Endothelial cell of umbilical vein (primary cell): ENCODE measurements at regions of chr4 and their contacts with region 1.

Region 1: DNA sequence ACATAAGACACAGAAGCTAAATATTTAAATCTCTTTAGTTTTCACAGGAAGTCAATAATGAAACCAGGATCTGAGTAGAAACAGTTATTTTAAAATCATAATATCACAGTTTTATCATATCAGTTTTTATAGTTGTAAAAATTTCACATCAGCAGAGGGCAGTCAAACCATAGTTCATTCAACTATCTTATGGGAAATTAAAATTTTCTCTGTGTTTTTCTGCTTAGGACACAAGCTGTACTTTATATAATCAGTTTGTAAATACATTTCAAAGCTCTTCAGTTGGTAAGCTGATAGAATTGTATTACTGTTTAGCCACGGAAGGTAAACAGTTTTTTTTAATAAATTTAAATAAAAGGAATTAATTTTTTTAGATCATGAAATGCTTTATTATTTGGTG is 204.8 kb upstream of the NUDT6 start:
- DNase-seq: peak; percentile 67
- H3K4me3 ChIP-seq: no peak overlapping the region
- H3K27ac ChIP-seq: peak overlapping the region; percentile 65
- H3K4me1 ChIP-seq: peaks cover 19% of the 10 kb centered on the region
- H3K27me3 ChIP-seq: no peaks in the 10 kb centered on the region
- CTCF ChIP-seq: no peak
- POLR2A ChIP-seq: no peak

Region 2: DNA sequence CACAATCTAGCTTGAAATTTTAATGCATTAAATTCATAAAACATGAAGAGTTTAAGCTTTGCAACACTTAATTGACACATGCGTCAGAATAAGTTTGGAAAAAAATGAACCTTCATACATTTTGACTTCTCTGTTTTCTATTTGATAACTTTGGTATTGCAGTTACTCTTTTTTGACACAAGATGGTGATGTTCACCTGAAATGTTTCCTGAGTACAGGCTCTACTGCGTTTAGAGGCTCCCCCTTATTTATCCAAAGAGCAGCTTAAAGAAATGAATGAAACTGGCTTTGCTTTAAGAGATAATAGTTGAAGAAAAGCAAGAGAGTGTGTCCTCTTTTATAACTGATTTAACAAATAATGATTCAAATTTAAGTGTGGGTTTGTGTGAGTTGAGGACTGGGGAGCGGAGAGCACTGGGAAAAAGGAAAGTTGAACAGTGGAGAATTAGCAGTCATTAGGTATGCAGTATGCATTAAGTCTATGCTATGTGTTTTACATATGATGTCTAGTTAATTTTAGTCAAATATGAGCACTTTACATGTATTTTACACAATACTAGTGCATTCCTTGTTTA is 24.2 kb before region 1 on chr4:
- CTCF ChIA-PET with region 1: interaction called, 11 read pairs
- POLR2A ChIA-PET with region 1: no interaction called
- dilution Hi-C with region 1: no loop called
- intact Hi-C with region 1: no loop called
- DNase-seq: peak; percentile 52
- H3K4me3 ChIP-seq: no peak overlapping the region
- H3K27ac ChIP-seq: no peak overlapping the region
- H3K4me1 ChIP-seq: no peaks in the 10 kb centered on the region
- H3K27me3 ChIP-seq: no peaks in the 10 kb centered on the region
- CTCF ChIP-seq: peak; percentile 37 to 44
- POLR2A ChIP-seq: no peak

Region 3: DNA sequence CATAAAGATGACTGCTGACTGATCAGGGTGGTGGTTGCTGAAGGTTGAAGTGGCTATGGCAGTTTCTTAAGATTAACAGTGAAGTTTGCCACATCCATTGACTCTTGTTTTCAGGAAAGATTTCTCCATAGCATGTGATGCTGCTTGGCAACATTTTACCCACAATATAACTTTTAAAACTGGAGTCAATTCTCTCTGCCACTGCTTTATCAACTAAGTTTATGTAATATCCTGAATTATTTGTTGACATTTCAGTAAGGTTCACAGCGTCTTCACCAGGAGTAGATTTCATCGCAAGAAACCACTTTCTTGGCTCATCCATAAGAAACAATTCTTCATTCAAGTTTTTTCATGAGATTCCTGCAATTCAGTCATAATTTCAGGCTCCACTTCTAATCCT is 102.8 kb after region 1 on chr4:
- CTCF ChIA-PET with region 1: no interaction called
- POLR2A ChIA-PET with region 1: no interaction called
- dilution Hi-C with region 1: no loop called
- intact Hi-C with region 1: no loop called
- DNase-seq: no peak
- H3K4me3 ChIP-seq: no peak overlapping the region
- H3K27ac ChIP-seq: no peak overlapping the region
- H3K4me1 ChIP-seq: peaks cover 6% of the 10 kb centered on the region
- H3K27me3 ChIP-seq: no peaks in the 10 kb centered on the region
- CTCF ChIP-seq: no peak
- POLR2A ChIP-seq: no peak

Region 4: DNA sequence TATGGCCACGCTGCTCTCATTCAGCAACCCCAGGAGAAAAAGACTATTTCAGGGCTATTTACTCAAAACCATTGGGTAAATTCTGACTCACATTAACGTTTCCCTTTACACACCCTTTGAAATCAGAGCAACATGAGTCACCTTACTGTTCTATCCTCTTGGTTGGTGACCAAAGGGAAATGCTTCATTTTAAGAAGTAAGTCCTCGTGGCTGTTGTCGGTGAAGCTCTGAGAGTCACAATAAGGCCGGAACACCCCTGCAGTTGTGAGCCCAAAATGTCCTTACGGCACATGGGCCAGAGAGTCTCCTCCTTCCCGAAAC is 213.1 kb after region 1 on chr4:
- CTCF ChIA-PET with region 1: interaction called, 8 read pairs
- POLR2A ChIA-PET with region 1: no interaction called
- dilution Hi-C with region 1: no loop called
- intact Hi-C with region 1: loop called (anchors 1 kb)
- DNase-seq: peak; percentile 92
- H3K4me3 ChIP-seq: no peak overlapping the region
- H3K27ac ChIP-seq: peak overlapping the region; percentile 90
- H3K4me1 ChIP-seq: peaks cover 58% of the 10 kb centered on the region
- H3K27me3 ChIP-seq: no peaks in the 10 kb centered on the region
- CTCF ChIP-seq: no peak
- POLR2A ChIP-seq: peak; percentile 29

Region 5: GRCh38 chr4:123390846-123391456 is 263.7 kb after region 1 on chr4:
- CTCF ChIA-PET with region 1: interaction called, 12 read pairs
- POLR2A ChIA-PET with region 1: no interaction called
- dilution Hi-C with region 1: no loop called
- intact Hi-C with region 1: loop called (anchors 1 kb)
- DNase-seq: peak; percentile 46
- H3K4me3 ChIP-seq: no peak overlapping the region
- H3K27ac ChIP-seq: no peak overlapping the region
- H3K4me1 ChIP-seq: peaks cover 31% of the 10 kb centered on the region
- H3K27me3 ChIP-seq: no peaks in the 10 kb centered on the region
- CTCF ChIP-seq: peak; percentile 19 to 29
- POLR2A ChIP-seq: no peak

Region 6: DNA sequence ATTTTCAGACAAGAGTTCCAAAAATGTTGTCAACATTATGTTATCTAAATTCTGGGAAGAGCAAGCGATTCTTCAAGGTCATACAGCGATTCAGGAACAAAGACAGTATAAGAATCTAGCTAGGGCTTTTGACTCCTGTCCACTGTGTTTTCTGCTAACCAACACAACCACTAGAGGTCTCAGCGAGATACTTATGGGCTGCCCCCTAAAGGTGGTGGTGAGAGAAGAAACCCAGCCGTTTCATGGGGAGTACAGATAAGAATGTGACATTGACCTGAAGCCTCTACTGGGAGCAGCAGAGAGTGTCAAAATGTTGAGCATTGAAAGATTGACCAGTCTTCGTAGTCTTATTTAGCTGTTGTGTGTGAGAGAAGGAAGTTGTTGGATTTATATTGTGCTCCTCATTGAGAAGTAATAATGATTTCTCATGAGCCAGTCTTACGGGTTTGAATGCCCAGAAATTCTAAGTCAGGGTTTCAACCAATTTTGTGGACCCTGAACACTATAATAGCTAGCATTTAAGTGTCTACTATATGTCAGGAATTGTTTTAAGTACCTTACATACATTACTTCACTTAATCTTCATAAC is 437.6 kb after region 1 on chr4:
- CTCF ChIA-PET with region 1: interaction called, 15 read pairs
- POLR2A ChIA-PET with region 1: no interaction called
- dilution Hi-C with region 1: no loop called
- intact Hi-C with region 1: loop called (anchors 5 kb)
- DNase-seq: peak; percentile 74
- H3K4me3 ChIP-seq: no peak overlapping the region
- H3K27ac ChIP-seq: no peak overlapping the region
- H3K4me1 ChIP-seq: peaks cover 5% of the 10 kb centered on the region
- H3K27me3 ChIP-seq: peaks cover 2 to 5% of the 10 kb centered on the region in 2 experiments
- CTCF ChIP-seq: peak; percentile 81 to 84
- POLR2A ChIP-seq: no peak

Region 7: DNA sequence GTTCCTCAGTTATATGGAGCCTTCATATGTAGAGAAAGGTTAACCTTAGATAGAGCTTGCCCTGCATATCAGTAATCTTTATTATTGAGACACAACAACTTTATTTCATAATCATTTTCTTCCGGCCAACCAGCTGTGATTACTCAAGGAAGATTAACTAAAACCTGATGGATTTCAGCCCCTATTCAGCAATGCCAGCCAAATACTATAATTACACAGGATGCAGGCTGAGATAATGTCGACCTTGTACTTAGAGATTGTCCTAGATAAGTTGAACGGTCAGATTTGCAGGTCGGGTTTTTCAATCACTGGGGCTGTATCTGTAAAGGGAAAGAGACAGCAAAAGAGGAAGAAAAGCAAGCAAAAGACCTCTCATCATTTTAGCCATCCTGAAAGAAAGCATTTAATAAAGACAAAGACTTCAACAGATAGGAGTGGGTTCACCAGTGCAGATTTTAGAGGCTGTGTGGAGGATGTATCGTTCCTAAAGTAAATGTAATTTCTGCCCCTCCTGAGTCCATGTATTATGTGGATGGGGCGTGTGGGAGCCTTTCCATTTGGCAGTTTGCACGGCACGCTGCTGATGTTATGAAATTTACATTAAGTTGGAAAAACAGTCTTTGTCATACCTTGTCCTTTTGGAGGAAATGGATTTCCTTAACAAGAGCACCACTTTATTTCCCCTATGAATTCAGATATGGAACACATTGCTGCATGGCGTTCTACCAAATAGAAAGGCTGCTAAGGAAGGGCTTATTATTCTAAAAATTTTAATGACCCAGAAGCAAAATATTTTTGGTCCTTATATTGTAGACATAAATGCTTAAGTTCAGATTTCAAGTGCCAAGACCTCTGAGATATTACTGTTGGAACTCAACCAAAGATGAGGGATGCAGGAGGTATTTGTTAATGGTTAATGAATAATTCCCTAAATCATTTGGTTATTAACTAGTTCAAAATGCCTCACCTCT is 766.1 kb after region 1 on chr4:
- CTCF ChIA-PET with region 1: no interaction called
- POLR2A ChIA-PET with region 1: no interaction called
- dilution Hi-C with region 1: no loop called
- intact Hi-C with region 1: loop called (anchors 1 kb)
- DNase-seq: peak; percentile 87
- H3K4me3 ChIP-seq: peak overlapping the region in 1 of 3 experiments; percentile 26
- H3K27ac ChIP-seq: peak overlapping the region; percentile 96
- H3K4me1 ChIP-seq: peaks cover 69% of the 10 kb centered on the region
- H3K27me3 ChIP-seq: no peaks in the 10 kb centered on the region
- CTCF ChIP-seq: no peak
- POLR2A ChIP-seq: peak; percentile 43

Region 8: GRCh38 chr4:124262211-124263179 is 1135.3 kb after region 1 on chr4:
- CTCF ChIA-PET with region 1: interaction called, 6 read pairs
- POLR2A ChIA-PET with region 1: no interaction called
- dilution Hi-C with region 1: no loop called
- intact Hi-C with region 1: loop called (anchors 1 kb)
- DNase-seq: peak; percentile 86
- H3K4me3 ChIP-seq: no peak overlapping the region
- H3K27ac ChIP-seq: no peak overlapping the region
- H3K4me1 ChIP-seq: no peaks in the 10 kb centered on the region
- H3K27me3 ChIP-seq: no peaks in the 10 kb centered on the region
- CTCF ChIP-seq: peak; percentile 70 to 87
- POLR2A ChIP-seq: no peak